Activated naive CD4-positive, alpha-beta T cell treated with anti-CD3 and anti-CD28 coated beads for 36 hours (primary cell): ENCODE measurements at regions of chr9 and their contacts with region 1.

Region 1: DNA sequence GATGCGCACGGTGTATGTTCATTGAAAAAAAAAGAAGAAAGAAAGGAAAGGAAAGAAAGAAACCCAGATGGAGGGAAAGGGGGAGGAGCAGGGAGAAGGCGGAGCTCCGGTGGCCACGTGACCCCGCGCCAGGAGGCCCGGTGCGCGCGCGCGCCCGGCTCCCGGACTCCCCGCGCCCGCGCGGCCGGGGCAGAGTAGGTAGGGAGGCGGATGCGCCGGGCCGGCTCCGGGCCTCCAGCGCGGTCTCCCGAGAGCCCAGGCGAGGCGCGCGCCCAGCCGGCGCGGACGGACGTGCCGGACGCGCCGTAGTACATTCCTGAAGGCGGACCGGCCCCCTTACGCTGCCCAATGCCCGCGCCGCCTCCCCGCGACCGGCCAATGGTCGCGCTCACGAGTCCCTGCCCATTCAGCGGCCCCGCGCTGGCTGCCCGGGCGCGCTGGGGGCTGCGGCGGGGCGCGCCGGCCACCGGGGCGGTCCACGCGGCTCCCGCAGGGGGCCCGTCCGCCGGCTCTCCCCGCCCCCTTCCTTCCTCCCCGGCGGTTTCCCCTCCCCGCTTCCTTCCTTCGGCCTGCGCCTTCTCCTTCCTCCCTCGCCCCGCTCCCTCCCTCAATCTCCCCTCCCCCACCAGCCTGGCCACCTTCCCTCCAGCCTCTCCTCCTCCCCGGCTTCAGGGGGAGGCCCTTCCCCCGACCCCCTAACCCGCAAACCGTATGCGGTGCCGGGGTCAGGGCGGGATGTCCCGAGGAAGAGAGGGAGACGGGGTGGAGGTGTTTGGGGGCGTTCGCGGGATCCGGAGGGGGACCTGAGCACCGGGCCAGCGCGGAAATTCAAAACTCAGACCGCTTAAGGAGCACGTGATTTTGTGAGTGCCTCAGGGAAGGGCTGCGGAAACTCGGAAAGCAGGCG is 5.8 kb downstream of the PTCH1 start:
- DNase-seq: peak; percentile 90
- H3K4me3 Mint-ChIP-seq: peak overlapping the region; percentile 91
- H3K27ac Mint-ChIP-seq: peak overlapping the region; percentile 90
- H3K4me1 Mint-ChIP-seq: peaks cover 25% of the 10 kb centered on the region
- H3K27me3 Mint-ChIP-seq: peaks cover 10% of the 10 kb centered on the region

Region 2: DNA sequence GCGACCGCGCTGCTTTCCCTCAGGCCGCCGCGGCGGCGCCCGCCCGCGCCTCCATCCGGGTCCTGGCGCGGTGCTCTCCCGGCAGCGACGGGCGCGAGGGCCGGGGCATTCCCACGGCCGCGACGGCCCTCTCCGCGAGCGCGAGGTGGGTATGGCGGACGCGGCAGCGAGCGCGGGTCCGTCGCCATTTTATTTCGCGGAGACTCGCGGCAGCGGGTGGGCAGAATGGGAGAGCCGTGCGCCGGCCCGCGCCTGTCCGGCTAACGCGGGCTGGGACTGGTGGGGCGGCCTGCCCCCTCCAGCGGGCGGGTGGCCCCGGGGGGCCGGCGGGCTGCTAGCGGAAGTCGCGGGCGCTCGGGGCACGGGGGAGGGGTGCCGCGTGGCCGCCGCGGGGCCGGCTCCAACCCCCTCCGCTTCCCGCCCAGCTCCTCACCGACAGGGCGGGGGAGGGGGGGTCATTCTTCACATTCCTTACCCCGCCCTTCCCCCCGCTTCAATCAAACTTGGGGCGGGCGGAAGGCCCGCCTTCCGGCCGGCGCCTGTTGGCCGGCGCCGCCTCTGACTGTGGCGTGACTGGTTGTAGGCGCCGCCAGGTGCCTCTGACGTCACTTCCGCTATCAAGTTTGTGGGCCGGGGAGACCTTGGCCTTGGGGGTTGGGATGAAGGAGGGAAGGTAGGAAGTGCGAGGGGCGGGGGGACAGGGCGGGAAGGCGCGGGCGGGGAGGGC is 1344.6 kb before region 1 on chr9:
- CTCF ChIA-PET with region 1: no interaction called
- intact Hi-C with region 1: loop called (anchors 5 kb)
- DNase-seq: peak; percentile 97
- H3K4me3 Mint-ChIP-seq: peak overlapping the region; percentile 86
- H3K27ac Mint-ChIP-seq: peak overlapping the region; percentile 87
- H3K4me1 Mint-ChIP-seq: peaks cover 41% of the 10 kb centered on the region
- H3K27me3 Mint-ChIP-seq: no peaks in the 10 kb centered on the region

Region 3: GRCh38 chr9:95425910-95426551 is 84.9 kb before region 1 on chr9:
- CTCF ChIA-PET with region 1: no interaction called
- intact Hi-C with region 1: loop called (anchors 2 kb)
- DNase-seq: peak; percentile 8
- H3K4me3 Mint-ChIP-seq: peak overlapping the region; percentile 77
- H3K27ac Mint-ChIP-seq: no peak overlapping the region
- H3K4me1 Mint-ChIP-seq: peaks cover 10% of the 10 kb centered on the region
- H3K27me3 Mint-ChIP-seq: no peaks in the 10 kb centered on the region

Region 4: DNA sequence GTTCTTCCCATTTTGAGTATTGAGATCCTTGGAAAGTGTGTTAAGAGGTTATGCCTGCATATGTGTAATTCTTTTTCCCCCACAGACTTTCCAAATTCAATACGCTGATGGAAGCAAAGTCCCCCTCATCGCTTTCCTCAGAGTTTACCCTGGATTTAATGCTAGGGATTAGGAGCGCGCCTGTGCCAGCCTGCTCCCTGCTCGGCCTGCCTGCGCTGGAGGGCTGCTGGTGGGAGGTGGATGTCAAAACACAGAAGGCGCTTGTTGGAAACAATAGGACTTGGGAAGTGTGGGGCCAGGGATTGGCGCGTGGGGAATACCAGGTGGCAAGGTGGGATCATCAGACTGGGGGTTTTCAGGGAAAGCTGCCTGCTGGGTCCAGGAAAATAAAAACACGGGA is 45.6 kb after region 1 on chr9:
- CTCF ChIA-PET with region 1: no interaction called
- intact Hi-C with region 1: no loop called
- DNase-seq: no peak
- H3K4me3 Mint-ChIP-seq: no peak overlapping the region
- H3K27ac Mint-ChIP-seq: no peak overlapping the region
- H3K4me1 Mint-ChIP-seq: no peaks in the 10 kb centered on the region
- H3K27me3 Mint-ChIP-seq: peaks cover 22% of the 10 kb centered on the region

Region 5: GRCh38 chr9:95626885-95627558 is 116.1 kb after region 1 on chr9:
- CTCF ChIA-PET with region 1: interaction called, 3 read pairs
- intact Hi-C with region 1: loop called (anchors 5 kb)
- DNase-seq: peak; percentile 91
- H3K4me3 Mint-ChIP-seq: no peak overlapping the region
- H3K27ac Mint-ChIP-seq: peak overlapping the region; percentile 97
- H3K4me1 Mint-ChIP-seq: peaks cover 31% of the 10 kb centered on the region
- H3K27me3 Mint-ChIP-seq: no peaks in the 10 kb centered on the region

Region 6: DNA sequence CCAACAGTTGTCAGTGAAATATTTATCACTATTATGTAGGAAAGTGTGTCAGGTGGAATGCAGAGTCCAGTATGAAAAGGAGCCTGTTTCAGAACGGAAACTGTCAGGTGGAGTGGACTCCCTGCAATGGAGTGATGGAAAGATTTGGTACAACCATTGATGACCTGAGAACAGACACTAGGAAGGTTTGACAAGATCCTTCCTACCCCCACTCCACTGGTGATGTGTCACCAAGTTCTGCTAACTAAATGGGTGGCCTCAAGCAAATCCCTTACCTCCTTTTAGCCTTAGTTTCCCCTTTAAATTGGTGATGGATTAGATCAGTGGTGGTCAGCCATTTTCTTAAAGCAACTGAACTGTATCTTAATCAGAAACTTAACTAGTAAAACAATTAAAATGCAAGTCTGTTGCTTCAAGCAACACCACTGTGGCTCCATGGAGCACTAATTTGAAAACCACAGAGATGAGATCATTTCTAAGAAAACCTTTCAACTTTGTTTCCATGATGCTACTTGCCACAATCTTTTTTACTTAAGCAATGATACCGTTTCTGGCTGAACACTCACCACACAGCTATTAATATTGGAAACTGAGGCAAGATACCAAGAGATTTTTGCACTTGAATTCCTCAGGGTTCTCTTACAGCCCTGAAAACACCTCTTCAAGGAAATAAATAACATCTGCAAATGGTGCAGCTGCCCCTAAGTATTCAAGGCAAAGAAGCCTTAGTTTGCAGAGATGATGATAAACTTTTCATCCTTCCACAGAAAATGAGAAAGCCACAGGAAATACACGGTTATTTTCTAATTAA is 505.1 kb after region 1 on chr9:
- CTCF ChIA-PET with region 1: no interaction called
- intact Hi-C with region 1: loop called (anchors 2 kb)
- DNase-seq: peak; percentile 62
- H3K4me3 Mint-ChIP-seq: peak overlapping the region; percentile 32
- H3K27ac Mint-ChIP-seq: peak overlapping the region; percentile 99
- H3K4me1 Mint-ChIP-seq: peaks cover 64% of the 10 kb centered on the region
- H3K27me3 Mint-ChIP-seq: no peaks in the 10 kb centered on the region

Region 7: DNA sequence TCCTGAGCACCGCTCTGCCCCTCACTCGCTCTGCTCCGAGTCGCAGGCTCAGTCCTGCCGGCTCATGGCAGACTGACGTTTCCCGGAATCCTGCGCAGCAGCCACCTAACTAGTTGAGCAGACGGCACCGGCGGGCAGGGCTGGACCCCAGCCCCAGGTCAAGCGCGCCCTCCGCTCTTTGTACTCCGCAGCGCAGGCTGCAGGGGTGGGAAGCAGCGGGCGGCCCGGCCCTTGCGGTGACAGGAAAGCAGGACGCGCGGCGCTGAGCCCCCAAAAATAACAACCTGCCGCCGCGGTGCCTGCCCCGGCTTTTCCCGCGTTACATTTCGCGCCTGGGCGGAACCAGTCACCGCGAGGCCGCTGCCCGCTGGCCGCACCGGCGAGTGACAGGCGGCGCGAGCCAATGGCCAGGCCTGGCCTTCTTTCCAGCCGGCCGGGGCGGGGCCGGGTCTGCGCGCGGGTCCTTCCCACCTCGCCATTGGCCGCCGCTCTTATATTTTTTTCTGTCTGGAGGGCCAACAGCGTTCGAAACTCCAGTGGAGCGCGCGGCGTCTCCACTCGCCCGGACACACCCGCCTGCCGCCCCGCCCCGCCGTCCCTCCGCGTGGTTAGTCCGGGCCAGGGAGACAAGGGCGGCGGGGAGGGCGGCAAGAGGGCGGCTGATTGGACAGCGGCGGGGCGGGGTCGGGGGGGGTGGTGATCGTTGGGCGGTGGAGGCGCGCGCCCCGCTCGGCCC is 907.3 kb after region 1 on chr9 and contains the start of gene ZNF367:
- CTCF ChIA-PET with region 1: no interaction called
- intact Hi-C with region 1: loop called (anchors 2 kb)
- DNase-seq: peak; percentile 94
- H3K4me3 Mint-ChIP-seq: peak within 1 kb of the TSS; percentile 84
- H3K27ac Mint-ChIP-seq: peak within 1 kb of the TSS; percentile 91
- H3K4me1 Mint-ChIP-seq: peaks cover 40% of the 10 kb centered on the region
- H3K27me3 Mint-ChIP-seq: no peaks in the 10 kb centered on the region
- total RNA-seq, gene ZNF367: 35.8 to 36.1 TPM